ENCODE measurements at regions of chr6 and their contacts with region 1.

Region 1: GRCh38 chr6:163017801-163018200 is 290.0 kb downstream of the PACRG start:
- DNase-seq: no peak
- H3K4me3 ChIP-seq: no peak overlapping the region
- H3K27ac ChIP-seq: no peak overlapping the region
- H3K4me1 ChIP-seq: no peaks in the 10 kb centered on the region
- H3K27me3 ChIP-seq: no peaks in the 10 kb centered on the region
- CTCF ChIP-seq: no peak
- EP300 ChIP-seq: no peak
- POLR2A ChIP-seq: no peak

Region 2: DNA sequence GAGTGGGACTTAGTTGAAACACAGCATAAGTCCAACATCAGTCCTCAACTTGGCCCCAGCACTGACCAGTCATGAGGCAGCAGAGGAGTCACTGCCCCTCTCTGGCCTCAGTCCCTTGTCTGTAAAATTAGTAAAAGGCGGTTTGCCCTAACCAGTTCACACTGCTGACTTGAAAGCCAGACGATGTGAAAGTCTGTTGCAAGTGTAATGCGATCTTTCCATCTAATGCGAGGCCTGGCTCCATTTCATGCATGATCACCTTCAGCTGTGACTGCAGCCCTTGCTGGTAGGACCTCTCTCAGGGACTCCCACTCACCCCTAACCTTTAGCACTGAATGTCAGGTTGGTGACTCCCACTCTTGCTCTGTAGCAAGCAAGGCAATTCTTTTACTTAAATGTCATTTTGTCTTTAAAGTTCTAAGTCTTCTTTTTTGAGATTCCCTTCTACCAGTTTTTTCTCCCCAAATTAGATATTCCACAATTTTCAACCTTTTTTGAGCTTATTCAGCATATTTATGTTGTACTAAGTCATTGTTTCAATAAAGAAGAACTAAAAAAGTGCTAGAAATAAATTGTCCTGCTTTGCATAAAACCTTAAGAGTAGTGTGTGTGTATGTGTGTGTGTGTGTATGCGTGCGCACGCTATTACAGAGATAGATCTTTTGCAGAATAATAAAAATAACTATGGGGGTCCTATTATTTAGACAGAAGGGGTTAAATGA is 44.5 kb before region 1 on chr6:
- intact Hi-C with region 1: loop called in 1 of 4 experiments (anchors 1 kb)
- DNase-seq: no peak
- H3K4me3 ChIP-seq: no peak overlapping the region
- H3K27ac ChIP-seq: no peak overlapping the region
- H3K4me1 ChIP-seq: no peaks in the 10 kb centered on the region
- H3K27me3 ChIP-seq: no peaks in the 10 kb centered on the region
- CTCF ChIP-seq: no peak
- EP300 ChIP-seq: no peak
- POLR2A ChIP-seq: no peak